ENCODE measurements at regions of chr19 and their contacts with region 1.

Region 1: DNA sequence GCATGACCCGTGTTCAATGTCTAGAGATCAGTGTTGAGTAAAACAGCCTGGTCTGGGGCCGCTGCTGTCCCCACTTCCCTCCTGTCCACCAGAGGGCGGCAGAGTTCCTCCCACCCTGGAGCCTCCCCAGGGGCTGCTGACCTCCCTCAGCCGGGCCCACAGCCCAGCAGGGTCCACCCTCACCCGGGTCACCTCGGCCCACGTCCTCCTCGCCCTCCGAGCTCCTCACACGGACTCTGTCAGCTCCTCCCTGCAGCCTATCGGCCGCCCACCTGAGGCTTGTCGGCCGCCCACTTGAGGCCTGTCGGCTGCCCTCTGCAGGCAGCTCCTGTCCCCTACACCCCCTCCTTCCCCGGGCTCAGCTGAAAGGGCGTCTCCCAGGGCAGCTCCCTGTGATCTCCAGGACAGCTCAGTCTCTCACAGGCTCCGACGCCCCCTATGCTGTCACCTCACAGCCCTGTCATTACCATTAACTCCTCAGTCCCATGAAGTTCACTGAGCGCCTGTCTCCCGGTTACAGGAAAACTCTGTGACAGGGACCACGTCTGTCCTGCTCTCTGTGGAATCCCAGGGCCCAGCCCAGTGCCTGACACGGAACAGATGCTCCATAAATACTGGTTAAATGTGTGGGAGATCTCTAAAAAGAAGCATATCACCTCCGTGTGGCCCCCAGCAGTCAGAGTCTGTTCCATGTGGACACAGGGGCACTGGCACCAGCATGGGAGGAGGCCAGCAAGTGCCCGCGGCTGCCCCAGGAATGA is 1.5 kb upstream of the CEACAM5 start:
- DNase-seq: peak; percentile 88 to 89 (median 88)
- ATAC-seq: peak; percentile 81
- H3K4me3 ChIP-seq: no peak overlapping the region
- H3K4me1 ChIP-seq: peaks cover 4% of the 10 kb centered on the region
- CTCF ChIP-seq: peak; percentile 97

Region 2: GRCh38 chr19:41548954-41549688 is 157.8 kb before region 1 on chr19:
- intact Hi-C with region 1: no loop called
- DNase-seq: peak in 1 of 3 donors; percentile 68
- ATAC-seq: peak; percentile 71
- H3K4me3 ChIP-seq: no peak overlapping the region
- H3K4me1 ChIP-seq: no peaks in the 10 kb centered on the region
- CTCF ChIP-seq: no peak

Region 3: DNA sequence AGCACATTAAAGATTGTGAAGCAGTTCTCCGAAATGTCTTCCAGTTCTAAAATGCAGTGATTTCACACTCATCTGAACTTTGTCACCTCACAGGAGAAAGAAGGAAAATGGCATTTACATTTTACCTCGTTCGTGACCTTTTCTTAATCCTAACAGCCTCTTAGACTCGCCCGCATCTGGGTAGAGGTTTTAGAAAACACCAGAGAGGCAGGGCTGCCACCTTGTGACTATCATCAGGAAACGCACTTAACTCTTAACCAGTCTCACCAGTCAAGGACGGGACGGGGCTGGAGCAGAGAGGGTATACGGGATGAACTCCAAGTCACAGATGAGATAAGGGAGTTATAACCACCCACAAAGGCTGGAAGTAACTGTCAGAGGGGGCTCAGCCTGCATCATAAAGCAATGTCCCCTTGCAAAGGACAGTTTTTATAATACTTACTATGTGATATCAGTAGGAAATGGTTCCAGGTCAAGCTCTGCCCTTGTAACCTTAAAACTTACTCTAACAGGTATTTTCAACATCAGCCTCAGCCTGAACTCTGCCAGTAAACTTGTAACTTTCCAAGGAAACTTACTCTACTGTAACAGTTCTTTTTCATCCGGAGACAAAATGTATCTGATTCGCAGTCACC is 39.8 kb after region 1 on chr19:
- intact Hi-C with region 1: loop called in 1 of 2 experiments (anchors 5 kb)
- DNase-seq: peak in 1 of 3 donors; percentile 79
- ATAC-seq: peak; percentile 69
- H3K4me3 ChIP-seq: no peak overlapping the region
- H3K4me1 ChIP-seq: peaks cover 24% of the 10 kb centered on the region
- CTCF ChIP-seq: peak; percentile 34

Region 4: GRCh38 chr19:41928221-41928683 is 221.3 kb after region 1 on chr19 and contains the start of gene ERFL:
- intact Hi-C with region 1: no loop called
- DNase-seq: peak in 1 of 3 donors; percentile 55
- ATAC-seq: peak; percentile 51
- H3K4me3 ChIP-seq: no peak within 1 kb of the TSS
- H3K4me1 ChIP-seq: peaks cover 17% of the 10 kb centered on the region
- CTCF ChIP-seq: no peak
- total RNA-seq, gene ERFL: 0.70 to 1.1 (median 0.98) TPM